ENCODE measurements at regions of chr18 and their contacts with region 1.

Region 1: DNA sequence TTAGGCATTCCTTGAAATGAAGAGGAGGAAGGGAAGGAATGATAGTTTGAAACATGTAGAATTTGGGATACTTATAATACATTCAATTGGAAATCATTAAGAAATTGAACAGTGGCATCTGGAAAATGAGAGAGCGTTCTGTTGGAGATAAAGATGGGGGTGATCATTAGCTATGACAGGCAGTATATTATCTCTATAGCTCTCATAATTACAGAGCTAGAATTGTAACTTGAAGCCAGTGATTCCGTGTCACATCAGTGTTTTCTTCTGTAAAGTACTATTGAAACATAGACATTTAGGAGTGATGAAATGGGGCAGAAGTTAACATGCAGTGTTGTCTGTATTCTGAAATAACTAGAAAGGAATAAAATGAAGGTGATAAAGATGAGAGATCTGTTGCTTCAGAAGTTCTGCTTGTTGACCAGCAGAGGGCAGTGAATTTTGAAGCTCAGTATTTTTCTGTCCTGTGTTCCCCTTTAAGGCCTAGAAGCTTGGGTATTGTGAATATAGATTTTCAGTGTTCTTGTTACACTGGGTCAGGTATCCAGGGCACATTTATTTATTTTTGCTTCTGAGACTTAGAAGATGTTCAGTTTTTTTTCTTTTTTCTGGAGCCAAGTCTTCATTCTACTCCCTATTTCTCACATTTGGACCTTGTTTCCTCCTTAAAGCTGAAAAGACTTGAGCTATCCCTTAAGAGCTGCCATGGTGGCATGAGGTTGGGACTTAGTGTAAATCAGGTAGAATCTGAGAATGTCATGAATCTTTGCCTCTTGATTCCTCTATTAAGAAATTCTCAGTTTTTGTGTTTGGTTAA is 157.4 kb downstream of the TAF4B start:
- DNase-seq: no peak
- H3K4me3 ChIP-seq: no peak overlapping the region
- H3K27me3 ChIP-seq: no peaks in the 10 kb centered on the region
- CTCF ChIP-seq: peak; percentile 73

Region 2: DNA sequence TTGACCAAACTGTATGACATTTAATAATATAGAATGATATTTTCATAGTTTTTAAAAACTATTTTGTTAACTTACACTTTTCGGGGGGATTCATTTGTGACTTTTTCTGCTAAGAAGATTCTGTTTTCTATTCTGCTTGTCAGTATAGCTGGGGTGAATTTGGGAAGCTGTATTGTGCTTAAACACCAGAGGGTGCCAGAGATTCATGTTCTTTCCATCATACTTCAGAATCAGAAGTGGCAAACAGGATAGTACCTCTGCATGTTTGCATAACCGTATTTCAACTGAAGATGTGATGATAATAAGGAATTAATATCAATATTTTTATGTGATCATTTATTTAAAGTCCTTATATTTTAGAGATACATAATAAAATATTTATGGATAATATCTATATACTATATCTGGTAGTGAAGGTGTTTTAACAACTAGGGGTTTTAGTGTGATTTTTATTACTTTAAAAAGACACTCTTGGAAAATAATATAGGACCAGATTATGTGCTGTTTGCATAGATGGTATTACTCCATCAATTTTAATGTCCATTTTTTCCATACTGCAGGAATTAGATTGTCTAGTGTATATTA is 76.4 kb before region 1 on chr18:
- CTCF ChIA-PET with region 1: interaction called, 11 read pairs
- POLR2A ChIA-PET with region 1: no interaction called
- DNase-seq: no peak
- H3K4me3 ChIP-seq: no peak overlapping the region
- H3K27me3 ChIP-seq: no peaks in the 10 kb centered on the region
- CTCF ChIP-seq: peak; percentile 71

Region 3: GRCh38 chr18:26370037-26370436 is 13.6 kb before region 1 on chr18:
- CTCF ChIA-PET with region 1: interaction called, 22 read pairs
- POLR2A ChIA-PET with region 1: no interaction called
- DNase-seq: no peak
- H3K4me3 ChIP-seq: no peak overlapping the region
- H3K27me3 ChIP-seq: no peaks in the 10 kb centered on the region
- CTCF ChIP-seq: no peak

Region 4: GRCh38 chr18:26394047-26394654 is 10.5 kb after region 1 on chr18:
- CTCF ChIA-PET with region 1: interaction called, 12 read pairs
- POLR2A ChIA-PET with region 1: no interaction called
- DNase-seq: no peak
- H3K4me3 ChIP-seq: no peak overlapping the region
- H3K27me3 ChIP-seq: no peaks in the 10 kb centered on the region; the same call in 1 of the 2 replicates
- CTCF ChIP-seq: no peak

Region 5: GRCh38 chr18:26405190-26405801 is 21.6 kb after region 1 on chr18:
- CTCF ChIA-PET with region 1: interaction called, 15 read pairs
- POLR2A ChIA-PET with region 1: no interaction called
- DNase-seq: no peak
- H3K4me3 ChIP-seq: no peak overlapping the region
- H3K27me3 ChIP-seq: peaks cover 1% of the 10 kb centered on the region; the same call in 1 of the 2 replicates
- CTCF ChIP-seq: peak; percentile 66

Region 6: DNA sequence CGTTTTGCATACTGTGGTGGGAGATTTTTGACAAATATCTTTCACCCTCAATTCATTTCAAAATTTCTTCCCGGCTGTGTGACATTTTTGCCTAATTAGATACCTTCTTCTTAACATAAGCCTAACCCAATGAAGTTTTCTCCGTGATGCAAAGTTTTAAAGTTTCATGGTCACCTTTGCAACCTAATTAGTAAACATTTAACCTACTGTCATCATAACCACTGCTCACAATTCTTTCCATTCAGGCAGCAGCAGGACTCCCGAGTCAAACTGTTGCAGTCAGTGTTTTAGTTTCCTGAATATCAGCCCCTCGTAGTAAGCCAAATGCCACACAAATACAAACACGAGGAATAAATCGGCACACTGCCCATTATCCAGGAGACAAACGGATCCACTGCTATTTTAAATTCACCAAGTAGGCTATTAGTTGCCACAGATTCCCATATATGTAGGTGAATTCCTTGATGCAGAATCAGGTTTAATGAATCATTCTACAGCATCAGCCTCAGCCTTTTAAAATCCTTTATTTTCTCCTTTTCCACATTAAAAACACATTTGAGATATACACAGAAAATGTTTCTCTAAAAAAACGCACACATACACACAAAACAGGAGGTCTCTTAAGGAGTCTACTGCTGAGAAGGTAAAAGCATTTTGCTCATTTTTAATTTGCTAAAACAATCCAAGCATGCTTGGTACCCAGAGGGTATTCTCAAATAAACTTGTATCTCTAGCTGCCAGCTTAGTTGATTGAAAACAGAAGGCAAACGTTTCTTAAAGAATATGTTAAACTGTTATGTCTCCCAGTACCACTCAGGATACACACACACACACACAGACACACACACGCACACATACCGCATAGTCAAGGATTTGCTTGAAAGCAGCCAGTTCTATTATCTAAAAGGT is 271.2 kb after region 1 on chr18:
- CTCF ChIA-PET with region 1: interaction called, 22 read pairs
- POLR2A ChIA-PET with region 1: no interaction called
- DNase-seq: no peak
- H3K4me3 ChIP-seq: no peak overlapping the region
- H3K27me3 ChIP-seq: peaks cover 29% of the 10 kb centered on the region
- CTCF ChIP-seq: no peak